ENCODE measurements at regions of chr4 and their contacts with region 1.

Region 1: DNA sequence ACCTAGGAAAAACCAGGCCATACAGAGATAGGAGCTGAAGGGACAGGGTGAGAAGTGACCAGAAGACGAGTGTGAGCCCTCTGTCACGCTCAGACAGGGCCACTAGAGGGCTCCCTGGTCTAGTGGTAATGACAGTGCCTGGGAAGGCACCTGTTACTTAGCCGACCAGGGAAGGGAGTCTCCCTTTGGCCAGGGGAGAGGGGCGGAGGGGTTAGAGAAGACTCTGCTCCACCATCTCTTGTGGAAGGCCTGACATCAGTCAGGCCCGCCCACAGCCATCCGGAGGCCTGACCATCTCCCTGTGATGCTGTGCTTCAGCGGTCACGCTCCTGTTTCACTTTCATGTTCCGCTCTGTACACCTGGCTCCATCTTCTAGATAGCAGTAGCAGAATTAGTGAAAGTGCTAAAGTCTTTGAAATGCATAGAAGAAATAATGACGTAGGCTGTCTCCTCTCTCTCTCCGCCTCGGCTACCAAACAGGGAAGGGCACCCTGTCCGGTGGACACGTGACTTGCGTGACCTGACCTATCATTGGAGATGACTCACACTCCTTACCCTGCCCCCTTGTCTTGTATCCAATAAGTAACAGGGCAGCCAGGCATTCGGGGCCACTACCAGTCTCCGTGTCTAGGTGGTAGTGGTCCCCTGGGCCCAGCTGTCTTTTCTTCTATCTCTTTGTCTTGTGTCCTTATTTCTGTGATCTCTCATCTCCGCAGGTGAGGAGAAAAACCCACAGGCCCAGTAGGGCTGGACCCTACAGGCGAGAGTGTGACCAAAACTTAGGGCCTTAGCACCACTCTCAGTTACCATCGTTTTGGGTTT is 26.7 kb downstream of the HTT-AS start:
- DNase-seq: peak; percentile 70 to 83
- ATAC-seq: peak; percentile 59 to 78 (median 66)
- H3K4me3 ChIP-seq: peak overlapping the region; percentile 11
- H3K4me3 Mint-ChIP-seq: peak overlapping the region; percentile 83
- H3K27ac ChIP-seq: peak overlapping the region; percentile 81
- H3K27ac Mint-ChIP-seq: peak overlapping the region; percentile 91 to 97
- H3K4me1 ChIP-seq: peaks cover 49% of the 10 kb centered on the region
- H3K4me1 Mint-ChIP-seq: peaks cover 38 to 42% of the 10 kb centered on the region in 2 donors
- H3K27me3 ChIP-seq: no peaks in the 10 kb centered on the region
- H3K27me3 Mint-ChIP-seq: no peaks in the 10 kb centered on the region
- CTCF ChIP-seq: peak; percentile 51

Region 2: GRCh38 chr4:3074078-3074795 is 26.6 kb after region 1 on chr4 and contains the starts of genes HTT and HTT-AS:
- intact Hi-C with region 1: loop called (anchors 1 kb)
- DNase-seq: peak; percentile 90 to 97
- ATAC-seq: peak; percentile 82 to 92 (median 85)
- H3K4me3 ChIP-seq: peak within 1 kb of the TSS; percentile 79
- H3K4me3 Mint-ChIP-seq: peak within 1 kb of the TSS; percentile 89
- H3K27ac ChIP-seq: peak within 1 kb of the TSS; percentile 88
- H3K27ac Mint-ChIP-seq: peak within 1 kb of the TSS; percentile 77 to 92
- H3K4me1 ChIP-seq: peaks cover 19% of the 10 kb centered on the region
- H3K4me1 Mint-ChIP-seq: peaks cover 20 to 22% of the 10 kb centered on the region in 2 donors
- H3K27me3 ChIP-seq: no peaks in the 10 kb centered on the region
- H3K27me3 Mint-ChIP-seq: no peaks in the 10 kb centered on the region
- CTCF ChIP-seq: no peak
- total RNA-seq, gene HTT: 132 to 175 (median 165) TPM
- total RNA-seq, gene HTT-AS: not detected

Region 3: GRCh38 chr4:3302173-3302785 is 254.6 kb after region 1 on chr4:
- intact Hi-C with region 1: loop called (anchors 1 kb)
- DNase-seq: peak; percentile 74 to 94
- ATAC-seq: peak; percentile 89 to 92 (median 89)
- H3K4me3 ChIP-seq: peak overlapping the region; percentile 12
- H3K4me3 Mint-ChIP-seq: peak overlapping the region; percentile 91
- H3K27ac ChIP-seq: peak overlapping the region; percentile 49
- H3K27ac Mint-ChIP-seq: peak overlapping the region; percentile 89 to 92
- H3K4me1 ChIP-seq: peaks cover 43% of the 10 kb centered on the region
- H3K4me1 Mint-ChIP-seq: peaks cover 31 to 33% of the 10 kb centered on the region in 2 donors
- H3K27me3 ChIP-seq: peaks cover 15% of the 10 kb centered on the region
- H3K27me3 Mint-ChIP-seq: peaks cover 0 to 12% of the 10 kb centered on the region in 2 donors
- CTCF ChIP-seq: no peak

Measured in natural killer cell (primary cell).